Right ventricle myocardium superior (tissue), 1 donor: ENCODE measurements at regions of chr2 and their contacts with region 1.

Region 1: DNA sequence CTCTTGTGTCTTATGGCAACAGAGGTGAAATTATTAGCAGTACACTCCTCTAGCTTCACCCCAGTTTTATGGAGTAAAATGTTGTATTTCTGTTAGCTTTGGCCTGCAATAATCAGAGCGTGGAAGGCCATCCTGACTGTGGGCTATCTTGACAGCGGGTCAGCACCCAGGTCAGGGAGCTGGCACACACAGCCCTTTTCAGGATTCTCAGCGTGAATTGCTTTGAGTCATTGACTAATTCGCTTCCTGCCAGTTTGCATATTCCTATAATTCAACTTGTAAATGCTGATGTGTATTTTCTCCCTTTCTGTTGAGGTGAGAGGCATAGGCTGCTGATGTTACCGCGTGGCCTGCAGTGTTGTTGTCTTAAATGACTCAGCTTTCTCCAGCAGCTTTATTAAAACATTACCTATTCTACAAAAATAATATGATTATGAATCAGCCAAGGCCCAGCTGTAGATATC is 109.6 kb upstream of the EML6 start:
- DNase-seq: no peak
- ATAC-seq: no peak

Region 2: GRCh38 chr2:54558188-54559005 is 55.4 kb before region 1 on chr2:
- intact Hi-C with region 1: loop called (anchors 10 kb)
- DNase-seq: peak; percentile 70
- ATAC-seq: peak; percentile 67

Region 3: GRCh38 chr2:55038428-55038827 is 424.6 kb after region 1 on chr2:
- intact Hi-C with region 1: no loop called
- DNase-seq: no peak
- ATAC-seq: no peak